OCI-LY7 (cell line): ENCODE measurements at regions of chr7 and their contacts with region 1.

Region 1: GRCh38 chr7:105013221-105013815 is 687 bp upstream of the KMT2E start:
- DNase-seq: peak; percentile 97
- H3K4me3 ChIP-seq: peak overlapping the region; percentile 90
- H3K27ac ChIP-seq: peak overlapping the region; percentile 96
- H3K4me1 ChIP-seq: peaks cover 43% of the 10 kb centered on the region
- CTCF ChIP-seq: peak; percentile 70

Region 2: DNA sequence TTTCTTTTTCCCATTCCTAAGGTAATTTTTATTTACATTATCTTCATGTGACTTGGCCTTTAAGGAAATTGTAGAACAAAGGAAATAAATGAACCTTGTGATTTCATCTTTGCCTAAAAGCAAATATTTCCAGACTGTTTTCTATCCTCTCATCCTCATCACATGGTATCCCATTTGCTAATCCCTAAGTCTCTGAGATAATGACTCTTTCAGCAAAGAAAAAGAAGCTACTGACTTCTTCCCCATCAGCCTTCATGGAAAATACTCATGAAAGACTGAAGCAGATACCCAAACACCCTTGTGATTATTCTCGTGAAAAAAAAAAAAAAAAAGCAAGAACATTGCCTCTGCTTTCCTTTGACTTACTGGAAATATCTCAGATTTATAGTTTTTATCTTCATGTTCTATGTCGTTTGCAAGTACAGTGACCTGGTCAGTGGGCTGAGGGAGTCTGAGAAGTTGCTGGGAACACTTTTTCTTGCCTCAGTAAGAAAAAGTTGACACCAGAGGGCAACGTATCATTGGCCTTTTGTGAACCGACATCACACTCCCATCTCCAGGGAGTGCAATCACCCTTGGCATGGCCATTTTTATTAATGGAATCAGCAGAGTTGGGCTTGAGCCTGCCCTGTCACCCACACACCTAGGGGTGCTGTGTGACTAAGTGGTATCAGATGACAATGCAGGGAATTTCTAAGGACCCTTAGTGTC is 245.3 kb before region 1 on chr7:
- CTCF ChIA-PET with region 1: no interaction called
- POLR2A ChIA-PET with region 1: no interaction called
- intact Hi-C with region 1: no loop called
- DNase-seq: no peak
- H3K4me3 ChIP-seq: no peak overlapping the region
- H3K27ac ChIP-seq: no peak overlapping the region
- H3K4me1 ChIP-seq: no peaks in the 10 kb centered on the region
- CTCF ChIP-seq: no peak

Region 3: DNA sequence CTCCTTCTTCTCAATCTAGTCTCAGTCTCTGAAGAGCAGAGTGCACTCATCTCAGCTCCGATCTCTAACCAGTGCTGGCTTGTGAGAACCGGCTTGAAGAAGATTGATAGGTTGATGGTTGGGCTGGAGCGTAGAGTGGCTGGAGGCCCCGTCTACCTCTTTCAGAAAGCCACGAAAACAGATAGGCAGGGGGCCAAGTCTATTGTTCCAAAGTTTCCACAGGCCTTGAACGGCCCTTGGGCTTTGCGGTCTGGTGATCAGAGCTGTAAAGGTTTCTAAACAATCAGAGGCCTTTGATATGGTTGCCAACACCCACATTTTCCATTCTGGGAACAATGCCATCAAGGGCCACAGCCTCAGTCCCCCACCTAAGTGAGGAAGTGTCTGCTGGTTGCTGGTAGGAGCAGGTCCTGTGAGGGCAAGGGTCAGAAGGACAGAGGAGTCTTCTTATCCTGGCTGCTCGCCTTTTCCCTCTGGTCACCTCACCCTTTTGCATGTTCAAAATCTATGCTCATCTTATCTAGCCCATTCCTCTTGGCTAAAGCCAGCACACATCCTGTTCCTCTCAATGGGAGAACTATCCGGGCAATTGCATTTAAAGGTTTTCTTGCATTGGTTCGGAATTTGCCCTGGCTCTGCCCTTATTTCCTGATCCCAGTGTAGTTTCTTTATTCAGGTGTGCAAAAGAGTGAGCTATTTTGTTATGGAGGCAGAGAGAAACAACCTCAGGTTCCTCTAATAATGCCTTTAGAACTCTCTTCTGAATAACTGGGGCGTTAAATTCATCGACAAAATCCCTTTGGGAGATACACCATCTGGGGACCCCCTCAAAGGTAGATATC is 69.6 kb before region 1 on chr7:
- CTCF ChIA-PET with region 1: no interaction called
- POLR2A ChIA-PET with region 1: interaction called, 5 read pairs
- intact Hi-C with region 1: loop called (anchors 1 kb)
- DNase-seq: peak; percentile 88
- H3K4me3 ChIP-seq: peak overlapping the region; percentile 65
- H3K27ac ChIP-seq: peak overlapping the region; percentile 96
- H3K4me1 ChIP-seq: peaks cover 86% of the 10 kb centered on the region
- CTCF ChIP-seq: no peak

Region 4: GRCh38 chr7:104993217-104993862 is 20.0 kb before region 1 on chr7:
- CTCF ChIA-PET with region 1: no interaction called
- POLR2A ChIA-PET with region 1: interaction called, 14 read pairs
- intact Hi-C with region 1: no loop called
- DNase-seq: no peak
- H3K4me3 ChIP-seq: no peak overlapping the region
- H3K27ac ChIP-seq: no peak overlapping the region
- H3K4me1 ChIP-seq: peaks cover under 1% of the 10 kb centered on the region
- CTCF ChIP-seq: no peak

Region 5: GRCh38 chr7:105028004-105028403 is 14.7 kb after region 1 on chr7:
- CTCF ChIA-PET with region 1: interaction called, 6 read pairs
- POLR2A ChIA-PET with region 1: interaction called, 49 read pairs
- intact Hi-C with region 1: no loop called
- DNase-seq: peak; percentile 31
- H3K4me3 ChIP-seq: no peak overlapping the region
- H3K27ac ChIP-seq: no peak overlapping the region
- H3K4me1 ChIP-seq: peaks cover 57% of the 10 kb centered on the region
- CTCF ChIP-seq: no peak

Region 6: DNA sequence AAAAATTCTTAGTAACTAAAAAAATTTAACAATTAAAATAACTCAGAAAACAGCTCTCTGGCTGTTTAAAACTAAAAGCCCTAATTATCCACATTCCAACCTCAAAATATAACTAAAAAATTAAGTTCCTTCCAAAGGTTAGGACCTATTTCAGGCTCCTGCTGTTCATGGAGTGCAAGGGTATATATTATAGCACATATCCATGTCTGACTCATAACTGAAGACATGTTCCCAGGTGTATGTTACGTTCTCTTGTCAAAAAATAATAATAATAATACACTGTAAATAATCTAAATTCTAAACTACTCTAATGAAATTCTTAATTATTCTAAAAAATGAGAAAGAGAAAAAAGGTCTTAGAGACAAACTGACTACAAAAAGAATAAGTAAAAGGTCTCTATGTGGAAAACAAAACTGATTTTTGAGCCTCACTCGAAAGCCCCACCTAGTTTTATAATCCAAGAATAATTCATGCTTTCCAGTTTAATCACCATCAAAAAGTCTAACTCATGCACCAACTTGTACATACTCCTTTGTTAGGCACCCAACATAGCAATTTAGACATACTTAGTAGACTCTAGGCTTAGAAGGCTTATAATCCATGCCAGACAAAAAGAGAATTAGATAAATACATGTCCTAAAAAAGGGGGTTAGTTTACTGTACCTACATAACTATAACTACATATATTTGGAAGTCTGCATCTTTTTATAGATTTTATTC is 172.1 kb after region 1 on chr7:
- CTCF ChIA-PET with region 1: no interaction called
- POLR2A ChIA-PET with region 1: no interaction called
- intact Hi-C with region 1: no loop called
- DNase-seq: no peak
- H3K4me3 ChIP-seq: no peak overlapping the region
- H3K27ac ChIP-seq: no peak overlapping the region
- H3K4me1 ChIP-seq: no peaks in the 10 kb centered on the region
- CTCF ChIP-seq: no peak

Region 7: DNA sequence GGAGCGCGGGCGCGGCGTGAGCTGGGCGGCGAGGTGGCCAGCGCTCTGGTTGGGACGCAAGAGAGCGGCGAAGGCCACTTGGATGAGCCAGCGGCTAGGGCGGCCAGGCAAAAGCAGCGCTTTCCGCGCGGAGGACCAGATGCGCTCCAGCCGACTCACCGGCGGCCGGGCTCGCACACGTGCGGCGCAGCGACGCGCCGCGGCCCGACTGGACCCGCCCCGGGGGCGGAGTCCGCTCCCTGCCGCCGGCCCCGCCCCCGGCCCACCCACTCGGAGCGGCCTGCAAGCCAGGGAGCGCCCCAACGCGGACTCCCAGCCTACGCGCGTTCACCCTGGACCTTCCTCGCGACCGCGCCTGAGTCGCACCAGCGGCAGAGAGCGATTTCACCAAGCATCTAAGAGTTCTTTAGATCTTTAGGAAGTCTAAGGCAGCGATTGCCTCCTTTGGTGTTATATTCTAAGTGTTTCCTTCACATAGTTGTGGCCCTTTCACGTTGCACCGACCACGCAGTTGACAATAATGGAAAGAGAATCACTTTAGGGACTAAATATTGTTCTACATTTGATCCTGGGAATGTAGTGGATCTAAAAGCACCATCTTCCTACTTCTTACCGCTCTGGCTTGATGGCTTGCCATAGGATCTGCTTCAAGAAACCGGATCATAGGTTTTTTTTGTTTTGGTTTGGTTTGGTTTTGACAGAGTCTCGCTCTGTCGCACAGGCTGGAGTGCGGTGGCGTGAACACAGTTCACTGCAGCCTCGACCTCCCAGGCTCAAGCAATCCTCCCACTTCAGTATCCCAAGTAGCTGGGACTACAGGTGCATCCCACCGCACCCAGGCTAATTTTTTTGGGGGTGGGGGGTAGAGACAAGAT is 509.0 kb after region 1 on chr7 and contains the start of gene PUS7:
- CTCF ChIA-PET with region 1: no interaction called
- POLR2A ChIA-PET with region 1: interaction called, 3 read pairs
- intact Hi-C with region 1: loop called (anchors 2 kb)
- DNase-seq: peak; percentile 92
- H3K4me3 ChIP-seq: peak within 1 kb of the TSS; percentile 76
- H3K27ac ChIP-seq: peak within 1 kb of the TSS; percentile 46
- H3K4me1 ChIP-seq: peaks cover 10% of the 10 kb centered on the region
- CTCF ChIP-seq: no peak
- total RNA-seq, gene PUS7: 13.3 and 13.7 TPM in 2 replicates

Region 8: GRCh38 chr7:106112117-106112971 is 1099.0 kb after region 1 on chr7 and contains the start of gene SYPL1:
- CTCF ChIA-PET with region 1: no interaction called
- POLR2A ChIA-PET with region 1: no interaction called
- intact Hi-C with region 1: loop called (anchors 10 kb)
- DNase-seq: peak; percentile 96
- H3K4me3 ChIP-seq: peak within 1 kb of the TSS; percentile 80
- H3K27ac ChIP-seq: peak within 1 kb of the TSS; percentile 83
- H3K4me1 ChIP-seq: peaks cover 62% of the 10 kb centered on the region
- CTCF ChIP-seq: peak; percentile 52; the same call in 1 of the 2 replicates
- total RNA-seq, gene SYPL1: 30.4 and 34.1 TPM in 2 replicates